ENCODE measurements at regions of chr22 and their contacts with region 1.

Region 1: DNA sequence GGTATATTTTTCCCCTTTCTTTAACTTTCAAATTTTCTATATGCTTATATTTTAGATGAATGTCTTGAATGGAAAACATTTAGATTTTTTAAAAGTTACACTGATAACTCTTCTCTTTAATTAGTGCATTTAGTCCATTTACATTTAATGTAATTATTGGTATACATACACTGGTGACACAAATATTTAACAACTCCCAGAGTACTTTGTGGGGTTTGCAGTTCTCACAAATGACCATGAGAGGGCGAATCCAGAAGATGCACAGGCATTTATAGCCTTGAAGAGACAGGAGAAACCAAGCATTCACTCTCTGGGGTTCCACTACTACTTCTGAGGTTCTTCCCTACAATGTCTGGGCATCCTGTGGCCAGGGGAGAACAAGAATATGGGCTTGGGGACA is 125.1 kb downstream of the TIMP3 start:
- DNase-seq: no peak
- H3K4me3 ChIP-seq: no peak overlapping the region
- H3K27ac ChIP-seq: no peak overlapping the region
- H3K4me1 ChIP-seq: no peaks in the 10 kb centered on the region
- H3K27me3 ChIP-seq: no peaks in the 10 kb centered on the region
- CTCF ChIP-seq: peak in 1 of 3 experiments; percentile 32
- POLR2A ChIP-seq: no peak

Region 2: DNA sequence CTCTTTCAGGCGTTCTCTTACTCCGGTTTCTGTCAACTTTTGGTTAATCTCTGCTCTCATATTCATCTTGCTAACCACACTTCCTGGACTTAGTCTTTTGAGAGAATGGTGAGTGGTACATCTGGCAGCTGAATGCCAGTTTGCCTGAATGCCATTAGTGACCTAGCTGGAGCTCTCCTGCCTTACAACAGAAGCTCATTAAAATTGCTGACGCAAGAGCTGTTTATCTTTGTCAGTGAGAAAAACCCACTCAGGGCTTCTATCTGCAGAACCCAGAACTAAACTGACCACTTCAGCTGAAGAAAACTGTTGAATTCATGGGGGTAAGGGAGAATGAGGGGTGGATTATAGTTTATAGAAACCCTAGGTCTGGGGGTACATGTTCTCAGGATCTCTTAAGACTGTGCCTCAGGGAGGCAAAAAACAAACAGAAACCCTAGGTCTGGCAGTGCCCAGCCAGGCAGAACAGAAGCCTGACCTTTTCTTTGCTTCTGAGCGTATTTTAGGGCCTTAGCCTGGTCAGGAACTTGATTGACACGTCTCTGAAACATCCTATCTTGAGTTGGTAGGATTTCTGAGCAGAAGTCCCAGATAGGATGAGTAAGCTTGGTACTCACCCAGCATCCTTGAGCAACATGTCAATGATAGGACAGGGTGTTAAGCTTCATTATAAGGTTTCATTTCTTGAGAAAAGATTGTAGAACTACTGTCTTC is 1035.1 kb before region 1 on chr22:
- intact Hi-C with region 1: no loop called
- DNase-seq: no peak
- H3K4me3 ChIP-seq: no peak overlapping the region
- H3K27ac ChIP-seq: no peak overlapping the region
- H3K4me1 ChIP-seq: no peaks in the 10 kb centered on the region
- H3K27me3 ChIP-seq: no peaks in the 10 kb centered on the region
- CTCF ChIP-seq: no peak
- POLR2A ChIP-seq: no peak

Region 3: GRCh38 chr22:32971276-32971675 is 44.7 kb after region 1 on chr22:
- intact Hi-C with region 1: loop called (anchors 2 kb)
- DNase-seq: no peak
- H3K4me3 ChIP-seq: no peak overlapping the region
- H3K27ac ChIP-seq: no peak overlapping the region
- H3K4me1 ChIP-seq: no peaks in the 10 kb centered on the region
- H3K27me3 ChIP-seq: no peaks in the 10 kb centered on the region
- CTCF ChIP-seq: no peak
- POLR2A ChIP-seq: no peak

Region 4: GRCh38 chr22:32985899-32986765 is 59.5 kb after region 1 on chr22:
- intact Hi-C with region 1: loop called (anchors 5 kb)
- DNase-seq: no peak
- H3K4me3 ChIP-seq: no peak overlapping the region
- H3K27ac ChIP-seq: no peak overlapping the region
- H3K4me1 ChIP-seq: peaks cover 19% of the 10 kb centered on the region
- H3K27me3 ChIP-seq: no peaks in the 10 kb centered on the region
- CTCF ChIP-seq: peak; percentile 70 to 86 (median 79)
- POLR2A ChIP-seq: no peak

Measured in vagina (tissue), 2 donors.